Activated CD8-positive, alpha-beta T cell treated with anti-CD3 and anti-CD28 coated beads for 36 hours (primary cell): ENCODE measurements at regions of chr2 and their contacts with region 1.

Region 1: GRCh38 chr2:43169987-43170386 is 56.4 kb downstream of the ZFP36L2 start:
- DNase-seq: peak; percentile 74
- ATAC-seq: no peak
- H3K4me3 Mint-ChIP-seq: peak overlapping the region; percentile 54
- H3K27ac Mint-ChIP-seq: peak overlapping the region; percentile 94
- H3K4me1 Mint-ChIP-seq: peaks cover 73% of the 10 kb centered on the region
- H3K27me3 Mint-ChIP-seq: no peaks in the 10 kb centered on the region
- CTCF ChIP-seq: peak; percentile 88

Region 2: GRCh38 chr2:43105586-43106558 is 64.1 kb before region 1 on chr2:
- CTCF ChIA-PET with region 1: no interaction called
- POLR2A ChIA-PET with region 1: no interaction called
- intact Hi-C with region 1: no loop called
- DNase-seq: no peak
- ATAC-seq: peak; percentile 37
- H3K4me3 Mint-ChIP-seq: no peak overlapping the region
- H3K27ac Mint-ChIP-seq: no peak overlapping the region
- H3K4me1 Mint-ChIP-seq: peaks cover 10% of the 10 kb centered on the region
- H3K27me3 Mint-ChIP-seq: no peaks in the 10 kb centered on the region
- CTCF ChIP-seq: no peak

Region 3: GRCh38 chr2:43139996-43140621 is 29.9 kb before region 1 on chr2:
- CTCF ChIA-PET with region 1: interaction called, 23 read pairs
- POLR2A ChIA-PET with region 1: interaction called, 14 read pairs
- intact Hi-C with region 1: loop called (anchors 5 kb)
- DNase-seq: peak; percentile 77
- ATAC-seq: peak; percentile 37
- H3K4me3 Mint-ChIP-seq: peak overlapping the region; percentile 55
- H3K27ac Mint-ChIP-seq: peak overlapping the region; percentile 87
- H3K4me1 Mint-ChIP-seq: peaks cover 74% of the 10 kb centered on the region
- H3K27me3 Mint-ChIP-seq: no peaks in the 10 kb centered on the region
- CTCF ChIP-seq: no peak

Region 4: DNA sequence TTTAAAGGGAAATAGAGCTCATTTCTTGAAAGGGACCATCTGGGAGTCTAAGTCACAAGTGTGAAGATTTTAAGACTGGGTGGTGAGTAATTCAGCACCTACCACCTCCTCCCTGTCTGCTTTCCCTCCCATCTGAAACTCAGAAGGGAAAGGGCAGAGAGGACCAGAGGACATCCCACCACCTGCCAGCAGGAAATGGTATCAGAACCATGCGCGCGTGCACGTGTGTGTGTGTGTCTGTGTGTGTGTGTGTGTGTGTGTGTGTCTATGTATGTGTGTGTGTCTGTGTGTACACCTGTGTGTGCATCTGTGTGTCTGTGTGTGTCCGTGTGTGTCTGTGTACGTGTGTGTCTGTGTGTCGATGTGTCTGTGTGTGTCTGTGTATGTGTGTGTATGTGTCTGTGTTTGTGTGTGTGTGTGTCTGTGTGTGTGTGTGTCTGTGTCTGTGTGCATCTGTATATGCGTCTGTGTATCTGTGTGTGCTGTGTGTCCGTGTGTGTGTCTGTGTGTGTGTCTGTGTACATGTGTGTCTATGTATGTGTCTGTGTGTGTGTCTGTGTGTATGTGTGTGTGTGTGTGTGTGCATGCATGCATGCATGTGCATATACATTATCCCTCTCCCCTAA is 20.4 kb before region 1 on chr2:
- CTCF ChIA-PET with region 1: interaction called, 10 read pairs
- POLR2A ChIA-PET with region 1: interaction called, 9 read pairs
- intact Hi-C with region 1: loop called (anchors 2 kb)
- DNase-seq: peak; percentile 88
- ATAC-seq: peak; percentile 94
- H3K4me3 Mint-ChIP-seq: peak overlapping the region; percentile 50
- H3K27ac Mint-ChIP-seq: peak overlapping the region; percentile 89
- H3K4me1 Mint-ChIP-seq: peaks cover 66% of the 10 kb centered on the region
- H3K27me3 Mint-ChIP-seq: no peaks in the 10 kb centered on the region
- CTCF ChIP-seq: no peak

Region 5: GRCh38 chr2:43158259-43158880 is 11.6 kb before region 1 on chr2:
- CTCF ChIA-PET with region 1: interaction called, 21 read pairs
- POLR2A ChIA-PET with region 1: interaction called, 22 read pairs
- intact Hi-C with region 1: loop called (anchors 2 kb)
- DNase-seq: peak; percentile 91
- ATAC-seq: peak; percentile 66
- H3K4me3 Mint-ChIP-seq: peak overlapping the region; percentile 70
- H3K27ac Mint-ChIP-seq: peak overlapping the region; percentile 98
- H3K4me1 Mint-ChIP-seq: peaks cover 78% of the 10 kb centered on the region
- H3K27me3 Mint-ChIP-seq: no peaks in the 10 kb centered on the region
- CTCF ChIP-seq: no peak